T-cell (primary cell): ENCODE measurements at regions of chr15 and their contacts with region 1.

Region 1: GRCh38 chr15:59797756-59798604 is 108.9 kb upstream of the BNIP2 start:
- DNase-seq: no peak
- ATAC-seq: peak in 3 of 4 experiments; percentile 9 to 19 (median 16)
- H3K4me3 ChIP-seq: peak overlapping the region in 1 of 2 donors; percentile 7
- H3K4me3 Mint-ChIP-seq: peak overlapping the region; percentile 41 to 64 (median 57)
- H3K27ac ChIP-seq: peak overlapping the region; percentile 67
- H3K27ac Mint-ChIP-seq: peak overlapping the region; percentile 93
- H3K4me1 ChIP-seq: peaks cover 37 to 49% of the 10 kb centered on the region in 2 experiments
- H3K4me1 Mint-ChIP-seq: peaks cover 75 to 84% (median 78%) of the 10 kb centered on the region in 3 donors
- H3K27me3 ChIP-seq: no peaks in the 10 kb centered on the region
- H3K27me3 Mint-ChIP-seq: no peaks in the 10 kb centered on the region

Region 2: DNA sequence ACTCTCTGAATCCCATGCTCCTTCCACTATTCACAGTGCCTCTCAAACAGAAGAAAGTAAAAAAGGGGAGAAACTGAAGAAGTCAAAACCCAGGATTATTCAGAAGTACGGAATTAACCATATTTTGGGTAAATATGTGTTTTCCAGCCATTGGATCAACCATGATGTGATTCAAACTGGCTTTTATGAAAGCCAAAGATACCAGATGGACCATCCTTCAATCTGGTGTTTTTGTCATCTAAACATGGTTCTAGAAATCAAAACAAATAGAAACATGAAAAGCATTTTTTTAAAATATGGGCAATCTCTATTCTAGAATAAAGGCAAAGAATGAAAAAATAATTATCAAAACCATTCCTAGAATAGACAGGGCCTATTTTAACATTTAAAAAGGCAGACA is 1258.4 kb after region 1 on chr15:
- CTCF ChIA-PET with region 1: no interaction called
- POLR2A ChIA-PET with region 1: interaction called in 1 of 2 experiments, 11 read pairs
- DNase-seq: no peak
- ATAC-seq: no peak
- H3K4me3 ChIP-seq: no peak overlapping the region
- H3K4me3 Mint-ChIP-seq: no peak overlapping the region
- H3K27ac ChIP-seq: no peak overlapping the region
- H3K27ac Mint-ChIP-seq: no peak overlapping the region
- H3K4me1 ChIP-seq: no peaks in the 10 kb centered on the region
- H3K4me1 Mint-ChIP-seq: peaks cover 1 to 9% (median 4%) of the 10 kb centered on the region in 3 donors
- H3K27me3 ChIP-seq: peaks cover 0 to 5% of the 10 kb centered on the region in 2 experiments
- H3K27me3 Mint-ChIP-seq: peaks cover 6 to 11% of the 10 kb centered on the region in 2 donors